ENCODE measurements at regions of chr17 and their contacts with region 1.

Region 1: GRCh38 chr17:41548844-41549595 is 20.9 kb upstream of the KRT19 start:
- DNase-seq: peak; percentile 38
- H3K4me3 ChIP-seq: peak overlapping the region; percentile 19
- CTCF ChIP-seq: peak; percentile 99

Region 2: GRCh38 chr17:40854159-40854814 is 694.7 kb before region 1 on chr17:
- CTCF ChIA-PET with region 1: interaction called, 152 read pairs
- POLR2A ChIA-PET with region 1: no interaction called
- DNase-seq: peak; percentile 80
- H3K4me3 ChIP-seq: no peak overlapping the region
- CTCF ChIP-seq: no peak

Region 3: GRCh38 chr17:41329281-41329948 is 219.6 kb before region 1 on chr17:
- CTCF ChIA-PET with region 1: interaction called, 51 read pairs
- POLR2A ChIA-PET with region 1: no interaction called
- DNase-seq: no peak
- H3K4me3 ChIP-seq: no peak overlapping the region
- CTCF ChIP-seq: peak; percentile 95

Region 4: DNA sequence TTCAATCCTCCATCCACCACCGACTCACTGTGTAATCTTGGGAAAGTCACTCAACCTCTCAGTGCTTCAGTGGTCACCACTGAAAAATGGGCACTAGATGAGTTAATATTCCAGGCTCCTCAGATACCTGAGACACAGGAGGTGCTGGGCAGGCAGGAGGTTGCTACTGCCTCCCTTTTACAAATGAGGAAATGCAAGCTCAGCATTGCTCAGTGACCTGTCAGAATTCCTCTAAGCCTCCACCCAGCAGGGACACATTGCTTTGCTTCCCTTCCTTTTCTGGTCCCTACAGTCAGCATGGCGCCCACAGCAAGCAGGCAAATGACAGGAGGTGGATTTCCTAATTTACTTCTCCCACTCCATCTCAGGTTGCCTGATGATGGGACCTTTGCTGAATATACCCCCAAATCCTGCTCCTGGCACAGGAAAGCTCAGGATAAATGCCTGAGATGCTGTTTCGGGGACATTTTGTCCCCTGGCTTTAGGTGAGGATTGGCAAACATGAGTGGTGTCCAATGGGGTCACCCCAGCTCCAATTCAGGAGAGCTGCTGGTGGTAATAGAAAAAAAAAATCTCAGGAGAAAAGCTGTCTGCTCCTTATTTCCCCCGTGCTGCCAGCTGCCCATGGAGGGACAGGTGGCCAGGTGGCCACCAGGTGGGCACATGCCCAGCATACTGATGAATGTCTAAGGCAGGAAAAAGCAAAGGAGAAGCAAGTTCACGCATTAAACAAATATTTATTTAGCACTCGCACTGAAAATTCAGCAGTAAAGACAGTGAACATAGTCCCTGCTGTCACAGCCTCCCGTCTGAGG is 38.6 kb before region 1 on chr17:
- CTCF ChIA-PET with region 1: interaction called, 11 read pairs
- POLR2A ChIA-PET with region 1: no interaction called
- DNase-seq: no peak
- H3K4me3 ChIP-seq: no peak overlapping the region
- CTCF ChIP-seq: no peak

Region 5: GRCh38 chr17:41567317-41567716 is 18.3 kb after region 1 on chr17:
- CTCF ChIA-PET with region 1: interaction called, 180 read pairs
- POLR2A ChIA-PET with region 1: no interaction called
- DNase-seq: no peak
- H3K4me3 ChIP-seq: no peak overlapping the region
- CTCF ChIP-seq: no peak

Region 6: DNA sequence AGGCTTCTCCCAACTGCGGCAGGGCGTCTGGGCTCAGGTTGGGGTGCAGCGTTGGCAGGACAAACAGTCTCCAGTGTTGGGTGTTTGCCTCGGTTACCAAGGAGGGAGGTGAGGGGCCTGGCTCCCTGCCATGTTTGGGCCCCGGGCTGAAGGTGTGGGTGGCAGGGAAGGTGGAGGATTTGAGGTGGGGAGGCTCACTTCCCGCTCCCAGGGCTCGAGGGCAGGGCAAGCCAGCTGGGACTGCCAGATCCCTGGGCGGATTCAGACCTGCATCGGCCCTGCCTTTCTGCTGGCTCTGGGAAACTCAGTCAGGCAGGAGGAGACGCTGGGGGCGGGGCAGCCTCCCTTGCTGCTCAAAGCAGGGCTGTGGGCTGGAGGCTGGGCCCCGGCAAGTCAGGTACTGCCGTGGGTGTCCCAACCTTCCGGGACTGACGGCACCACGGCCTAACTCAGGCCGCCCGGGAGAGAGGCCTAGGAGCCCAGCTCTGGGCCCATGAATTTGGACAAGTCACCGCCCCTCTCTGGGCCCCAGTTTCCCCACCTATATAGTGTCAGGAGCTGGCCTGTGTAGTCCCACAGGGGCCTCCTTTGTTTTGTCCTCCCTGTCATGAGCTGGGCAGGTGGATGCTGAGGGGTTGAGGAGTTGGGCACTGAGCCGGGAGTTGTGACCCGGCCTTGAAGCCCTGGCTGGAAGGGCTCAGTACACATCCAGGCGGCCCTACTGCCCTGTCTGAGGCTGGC is 106.8 kb after region 1 on chr17:
- CTCF ChIA-PET with region 1: interaction called, 604 read pairs
- POLR2A ChIA-PET with region 1: no interaction called
- DNase-seq: no peak
- H3K4me3 ChIP-seq: no peak overlapping the region
- CTCF ChIP-seq: no peak